ENCODE measurements at regions of chr17 and their contacts with region 1.

Region 1: DNA sequence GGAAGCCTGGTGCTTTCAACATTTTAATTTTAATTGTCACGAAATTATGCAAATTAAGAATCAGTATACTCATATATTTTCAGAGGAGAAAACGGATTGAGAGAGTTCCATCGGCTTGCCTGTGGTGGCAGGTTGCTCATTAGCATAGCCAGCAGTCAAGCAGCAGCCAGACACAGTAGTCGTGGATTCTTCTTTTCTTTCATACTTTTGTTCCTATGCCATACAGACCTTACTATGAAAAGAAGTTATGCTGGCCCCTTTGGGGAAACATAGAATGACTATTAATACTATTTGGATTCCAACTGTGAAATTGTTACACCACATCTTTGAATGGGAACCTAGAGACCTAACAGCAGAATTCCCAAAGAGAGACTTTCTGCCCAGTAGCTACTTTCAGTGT is 617.7 kb upstream of the CA10 start:
- DNase-seq: no peak
- ATAC-seq: no peak
- H3K4me3 ChIP-seq: no peak overlapping the region
- H3K27ac ChIP-seq: no peak overlapping the region
- H3K4me1 ChIP-seq: no peaks in the 10 kb centered on the region
- H3K27me3 ChIP-seq: no peaks in the 10 kb centered on the region
- CTCF ChIP-seq: no peak

Region 2: GRCh38 chr17:52837492-52838272 is 61.4 kb after region 1 on chr17:
- CTCF ChIA-PET with region 1: no interaction called
- POLR2A ChIA-PET with region 1: no interaction called
- in situ Hi-C with region 1: no loop called
- intact Hi-C with region 1: loop called (anchors 10 kb)
- DNase-seq: no peak
- ATAC-seq: no peak
- H3K4me3 ChIP-seq: no peak overlapping the region
- H3K27ac ChIP-seq: no peak overlapping the region
- H3K4me1 ChIP-seq: no peaks in the 10 kb centered on the region
- H3K27me3 ChIP-seq: no peaks in the 10 kb centered on the region
- CTCF ChIP-seq: no peak